ENCODE measurements at regions of chr15 and their contacts with region 1.

Region 1: GRCh38 chr15:81098861-81099651 is 35.0 kb upstream of the CFAP161 start:
- DNase-seq: no peak

Region 2: GRCh38 chr15:80455668-80456442 is 643.2 kb before region 1 on chr15:
- CTCF ChIA-PET with region 1: interaction called, 10 read pairs
- POLR2A ChIA-PET with region 1: no interaction called
- DNase-seq: peak; percentile 79

Region 3: GRCh38 chr15:81115054-81115939 is 16.2 kb after region 1 on chr15:
- CTCF ChIA-PET with region 1: no interaction called
- POLR2A ChIA-PET with region 1: no interaction called
- DNase-seq: no peak

Measured in HEK293T (cell line).